CD8-positive, alpha-beta T cell (primary cell): ENCODE measurements at regions of chr19 and their contacts with region 1.

Region 1: DNA sequence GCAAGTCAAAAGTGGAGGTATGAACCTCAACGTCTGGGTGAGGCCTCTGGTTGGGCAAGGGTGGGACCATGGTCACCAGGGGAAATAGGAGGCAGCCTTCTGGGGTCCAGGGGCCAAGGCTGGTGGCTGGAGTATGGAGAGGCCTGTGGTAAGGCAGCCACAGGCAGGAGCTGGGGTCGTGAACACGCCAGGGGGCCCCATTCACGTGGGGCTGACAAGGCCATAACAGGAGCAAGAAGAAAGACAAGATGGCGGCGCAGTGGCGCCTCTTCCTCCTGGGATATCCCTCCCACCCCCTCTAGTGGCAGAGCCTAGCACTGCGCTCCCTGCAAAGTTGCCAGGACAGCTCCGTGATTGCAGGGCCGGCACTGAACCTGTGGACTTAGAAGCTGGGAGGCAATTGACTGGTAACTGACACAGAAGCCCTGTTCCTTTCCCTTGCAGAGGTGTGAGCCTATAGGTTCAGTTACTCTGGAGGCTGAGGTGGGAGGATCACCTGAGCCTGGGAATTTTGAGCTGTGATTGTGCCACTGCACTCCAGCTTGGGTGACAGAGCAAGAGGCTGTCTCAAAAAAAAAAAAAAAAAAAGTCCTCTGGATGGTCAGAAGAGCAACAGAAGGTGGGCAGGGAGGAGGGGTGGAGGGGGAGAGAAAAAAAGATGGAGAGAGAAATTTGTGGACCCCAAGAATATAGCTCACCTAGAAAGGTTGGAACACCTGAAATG is 19.7 kb upstream of the EDDM13 start:
- DNase-seq: peak; percentile 35 to 75 (median 69)
- ATAC-seq: peak; percentile 80
- H3K4me3 ChIP-seq: no peak overlapping the region
- H3K4me3 Mint-ChIP-seq: no peak overlapping the region
- H3K27ac ChIP-seq: no peak overlapping the region
- H3K27ac Mint-ChIP-seq: no peak overlapping the region
- H3K4me1 ChIP-seq: no peaks in the 10 kb centered on the region
- H3K4me1 Mint-ChIP-seq: no peaks in the 10 kb centered on the region
- H3K27me3 ChIP-seq: no peaks in the 10 kb centered on the region
- H3K27me3 Mint-ChIP-seq: no peaks in the 10 kb centered on the region
- CTCF ChIP-seq: peak; percentile 65

Region 2: DNA sequence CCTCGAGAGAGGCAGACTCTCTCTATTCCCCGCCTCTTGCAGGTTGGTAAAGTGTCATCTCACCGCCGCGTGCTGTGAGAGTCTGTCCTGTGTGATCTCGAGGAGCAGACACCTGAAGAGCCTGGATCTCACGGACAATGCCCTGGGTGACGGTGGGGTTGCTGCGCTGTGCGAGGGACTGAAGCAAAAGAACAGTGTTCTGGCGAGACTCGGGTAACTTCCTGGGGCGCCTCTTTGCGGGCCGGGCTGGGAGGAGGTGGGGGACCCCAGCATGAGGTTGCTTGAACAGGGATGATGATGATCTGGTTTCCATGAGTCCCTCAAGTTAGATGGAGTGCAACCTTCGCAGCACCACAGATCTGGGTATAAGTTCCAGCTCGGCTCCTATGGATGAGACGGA is 199.3 kb before region 1 on chr19:
- CTCF ChIA-PET with region 1: no interaction called
- POLR2A ChIA-PET with region 1: no interaction called
- intact Hi-C with region 1: no loop called
- DNase-seq: no peak
- ATAC-seq: no peak
- H3K4me3 ChIP-seq: no peak overlapping the region
- H3K4me3 Mint-ChIP-seq: no peak overlapping the region
- H3K27ac ChIP-seq: no peak overlapping the region
- H3K27ac Mint-ChIP-seq: no peak overlapping the region
- H3K4me1 ChIP-seq: no peaks in the 10 kb centered on the region
- H3K4me1 Mint-ChIP-seq: no peaks in the 10 kb centered on the region
- H3K27me3 ChIP-seq: no peaks in the 10 kb centered on the region
- H3K27me3 Mint-ChIP-seq: peaks cover 39% of the 10 kb centered on the region
- CTCF ChIP-seq: no peak

Region 3: DNA sequence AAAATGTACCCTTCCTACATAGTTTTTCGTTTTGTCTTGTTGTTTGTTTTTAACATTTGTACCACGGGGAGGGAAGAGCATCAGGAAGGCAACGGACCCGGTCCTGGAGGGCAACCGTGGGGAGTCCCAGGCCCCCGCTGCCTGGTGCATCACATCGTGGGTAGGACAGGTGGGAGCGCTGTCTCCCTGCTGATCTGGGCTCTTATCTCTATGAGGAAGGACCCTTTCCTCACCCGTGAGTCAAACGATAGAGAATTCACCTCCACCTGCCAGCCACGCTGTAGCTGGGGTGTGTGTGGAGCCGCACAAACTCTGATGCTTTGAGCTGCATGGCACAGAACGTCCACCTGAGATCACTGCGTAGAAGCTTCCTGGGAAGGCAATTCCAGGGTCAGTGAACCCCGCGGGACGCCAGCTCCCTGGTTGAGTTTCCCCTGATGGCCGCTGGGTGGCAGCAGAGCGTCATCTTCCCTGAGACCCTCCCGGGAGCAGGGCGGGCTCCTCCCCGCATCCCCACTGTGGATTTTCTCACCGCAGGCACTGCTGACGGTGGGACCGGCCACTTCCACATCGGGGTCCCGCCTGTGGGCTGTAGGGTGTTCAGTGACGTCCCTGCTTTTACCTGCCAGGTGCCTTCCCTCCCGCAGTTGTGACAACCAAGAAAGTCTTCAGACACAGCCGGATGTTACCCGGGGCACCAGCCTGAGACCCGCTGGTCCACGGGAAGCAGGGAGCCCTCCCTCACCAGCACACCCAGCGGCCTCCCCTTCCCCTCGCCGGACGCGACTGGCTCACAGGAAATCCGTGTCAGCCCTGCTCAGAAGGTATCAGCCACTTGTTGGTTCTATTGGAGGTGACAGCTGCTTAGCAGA is 186.5 kb before region 1 on chr19:
- CTCF ChIA-PET with region 1: interaction called, 6 read pairs
- POLR2A ChIA-PET with region 1: no interaction called
- intact Hi-C with region 1: loop called in 1 of 2 experiments (anchors 5 kb)
- DNase-seq: peak; percentile 26 to 80 (median 65)
- ATAC-seq: peak; percentile 77
- H3K4me3 ChIP-seq: peak overlapping the region; percentile 13 to 25
- H3K4me3 Mint-ChIP-seq: peak overlapping the region; percentile 71
- H3K27ac ChIP-seq: no peak overlapping the region
- H3K27ac Mint-ChIP-seq: peak overlapping the region; percentile 37
- H3K4me1 ChIP-seq: peaks cover 6% of the 10 kb centered on the region
- H3K4me1 Mint-ChIP-seq: peaks cover 13% of the 10 kb centered on the region
- H3K27me3 ChIP-seq: peaks cover 4 to 8% of the 10 kb centered on the region in 2 experiments
- H3K27me3 Mint-ChIP-seq: peaks cover 33% of the 10 kb centered on the region
- CTCF ChIP-seq: peak; percentile 89

Region 4: GRCh38 chr19:56105090-56105701 is 147.7 kb before region 1 on chr19:
- CTCF ChIA-PET with region 1: interaction called, 3 read pairs
- POLR2A ChIA-PET with region 1: no interaction called
- intact Hi-C with region 1: loop called in 1 of 2 experiments (anchors 1 kb)
- DNase-seq: peak; percentile 13 to 70 (median 56)
- ATAC-seq: peak; percentile 77
- H3K4me3 ChIP-seq: no peak overlapping the region
- H3K4me3 Mint-ChIP-seq: peak overlapping the region; percentile 37
- H3K27ac ChIP-seq: no peak overlapping the region
- H3K27ac Mint-ChIP-seq: peak overlapping the region; percentile 57
- H3K4me1 ChIP-seq: peaks cover 11% of the 10 kb centered on the region
- H3K4me1 Mint-ChIP-seq: peaks cover 38% of the 10 kb centered on the region
- H3K27me3 ChIP-seq: no peaks in the 10 kb centered on the region
- H3K27me3 Mint-ChIP-seq: no peaks in the 10 kb centered on the region
- CTCF ChIP-seq: peak; percentile 68

Region 5: GRCh38 chr19:56333505-56333904 is 80.6 kb after region 1 on chr19:
- CTCF ChIA-PET with region 1: interaction called, 24 read pairs
- POLR2A ChIA-PET with region 1: no interaction called
- intact Hi-C with region 1: loop called (anchors 1 to 5 kb)
- DNase-seq: peak in 6 of 9 experiments; percentile 9 to 69 (median 42)
- ATAC-seq: peak; percentile 54
- H3K4me3 ChIP-seq: no peak overlapping the region
- H3K4me3 Mint-ChIP-seq: no peak overlapping the region
- H3K27ac ChIP-seq: no peak overlapping the region
- H3K27ac Mint-ChIP-seq: no peak overlapping the region
- H3K4me1 ChIP-seq: no peaks in the 10 kb centered on the region
- H3K4me1 Mint-ChIP-seq: no peaks in the 10 kb centered on the region
- H3K27me3 ChIP-seq: no peaks in the 10 kb centered on the region
- H3K27me3 Mint-ChIP-seq: peaks cover 3% of the 10 kb centered on the region
- CTCF ChIP-seq: peak; percentile 64

Region 6: GRCh38 chr19:57103573-57104277 is 850.9 kb after region 1 on chr19:
- CTCF ChIA-PET with region 1: interaction called, 3 read pairs
- POLR2A ChIA-PET with region 1: no interaction called
- intact Hi-C with region 1: loop called in 1 of 2 experiments (anchors 2 kb)
- DNase-seq: peak; percentile 14 to 79 (median 59)
- ATAC-seq: peak; percentile 97
- H3K4me3 ChIP-seq: peak overlapping the region in 1 of 2 experiments; percentile 11
- H3K4me3 Mint-ChIP-seq: peak overlapping the region; percentile 70
- H3K27ac ChIP-seq: no peak overlapping the region
- H3K27ac Mint-ChIP-seq: no peak overlapping the region
- H3K4me1 ChIP-seq: peaks cover 4% of the 10 kb centered on the region
- H3K4me1 Mint-ChIP-seq: peaks cover 6% of the 10 kb centered on the region
- H3K27me3 ChIP-seq: peaks cover 0 to 4% of the 10 kb centered on the region in 2 experiments
- H3K27me3 Mint-ChIP-seq: peaks cover 26% of the 10 kb centered on the region
- CTCF ChIP-seq: peak; percentile 82